ENCODE measurements at regions of chr11 and their contacts with region 1.

Region 1: DNA sequence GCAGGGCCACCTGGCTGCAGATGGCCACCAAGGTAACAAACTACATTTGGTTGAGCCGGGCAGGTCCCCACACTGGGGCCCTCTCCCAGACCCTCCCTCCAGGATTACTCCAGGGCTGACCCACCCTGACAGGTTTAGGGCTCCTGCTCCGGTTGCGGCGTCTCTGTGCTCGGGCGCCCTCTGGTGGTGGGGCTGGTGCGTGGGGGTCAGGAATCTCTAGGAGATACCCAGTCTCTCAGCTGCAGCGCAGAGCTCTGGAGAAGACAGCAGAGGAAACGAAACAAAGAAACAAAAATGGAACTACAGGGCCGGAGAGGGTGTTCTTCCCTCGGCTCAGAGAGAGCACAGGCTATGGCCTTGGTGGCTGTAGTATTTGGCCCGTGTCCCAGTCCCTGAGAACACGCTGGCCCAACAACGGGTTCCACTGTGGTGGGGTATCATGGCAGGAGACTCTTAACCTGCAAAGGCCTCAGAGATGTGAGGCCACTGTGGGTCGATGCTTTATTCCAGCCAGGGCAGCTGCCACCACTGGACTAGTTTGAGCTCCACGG is 2.4 kb downstream of the C11orf96 start:
- DNase-seq: peak; percentile 90
- ATAC-seq: peak; percentile 23

Region 2: DNA sequence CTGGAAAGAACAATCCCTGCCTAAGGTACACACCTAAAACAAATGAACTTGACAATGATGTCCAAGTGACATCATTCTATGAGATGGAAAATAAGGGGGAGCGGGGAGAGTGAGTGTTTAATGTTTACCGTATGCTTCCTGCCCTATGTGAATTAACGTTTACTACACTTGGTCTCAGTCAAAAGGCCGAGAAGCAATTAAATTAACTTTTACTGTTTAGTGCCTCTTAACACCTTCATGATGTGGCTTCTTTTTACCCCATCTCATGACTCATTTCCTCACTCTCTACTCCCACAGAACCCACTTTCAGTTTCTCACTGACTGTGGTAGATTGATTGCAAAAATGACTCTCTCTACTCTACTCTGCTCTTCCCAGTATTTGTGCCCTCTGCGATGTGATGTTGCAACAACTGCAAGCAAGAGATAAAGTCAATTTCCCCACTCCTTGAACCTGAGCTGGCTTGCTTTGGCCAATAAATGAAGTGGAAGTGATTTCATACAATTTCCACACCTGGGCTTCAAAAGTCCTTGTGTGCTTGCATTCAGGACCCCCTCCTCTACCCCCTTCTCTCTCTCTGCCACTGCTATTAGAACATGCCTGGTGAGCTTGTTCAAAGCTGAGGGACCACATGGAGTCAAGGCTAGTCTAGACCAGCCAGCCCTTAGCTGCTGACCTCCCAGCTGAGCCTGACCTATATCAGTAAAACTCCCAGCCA is 75.8 kb before region 1 on chr11:
- intact Hi-C with region 1: no loop called
- DNase-seq: no peak
- ATAC-seq: no peak

Region 3: GRCh38 chr11:43895601-43896000 is 49.2 kb before region 1 on chr11:
- intact Hi-C with region 1: loop called (anchors 5 kb)
- DNase-seq: no peak
- ATAC-seq: no peak

Region 4: DNA sequence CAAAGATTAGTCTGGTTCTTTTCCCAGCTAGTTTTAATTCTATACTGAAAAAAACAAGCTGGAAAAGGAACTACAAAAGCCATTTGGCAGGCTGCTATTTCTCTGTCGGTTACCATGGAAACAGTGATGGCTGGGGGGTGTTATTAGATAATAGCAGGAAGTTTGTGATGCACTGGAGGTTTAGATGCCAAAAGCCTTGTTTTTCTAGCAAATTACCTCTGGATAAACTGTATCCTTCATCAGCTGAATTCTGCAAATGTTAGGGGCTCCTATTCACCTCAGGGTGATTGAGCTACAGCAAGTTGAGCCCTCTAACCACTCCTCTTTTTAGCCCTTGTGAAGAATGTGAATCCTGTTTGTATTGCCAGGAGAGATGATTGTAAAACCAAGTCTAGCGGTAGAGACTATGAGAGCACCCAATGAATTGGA is 39.0 kb before region 1 on chr11:
- intact Hi-C with region 1: loop called (anchors 5 kb)
- DNase-seq: no peak
- ATAC-seq: peak; percentile 56

Region 5: DNA sequence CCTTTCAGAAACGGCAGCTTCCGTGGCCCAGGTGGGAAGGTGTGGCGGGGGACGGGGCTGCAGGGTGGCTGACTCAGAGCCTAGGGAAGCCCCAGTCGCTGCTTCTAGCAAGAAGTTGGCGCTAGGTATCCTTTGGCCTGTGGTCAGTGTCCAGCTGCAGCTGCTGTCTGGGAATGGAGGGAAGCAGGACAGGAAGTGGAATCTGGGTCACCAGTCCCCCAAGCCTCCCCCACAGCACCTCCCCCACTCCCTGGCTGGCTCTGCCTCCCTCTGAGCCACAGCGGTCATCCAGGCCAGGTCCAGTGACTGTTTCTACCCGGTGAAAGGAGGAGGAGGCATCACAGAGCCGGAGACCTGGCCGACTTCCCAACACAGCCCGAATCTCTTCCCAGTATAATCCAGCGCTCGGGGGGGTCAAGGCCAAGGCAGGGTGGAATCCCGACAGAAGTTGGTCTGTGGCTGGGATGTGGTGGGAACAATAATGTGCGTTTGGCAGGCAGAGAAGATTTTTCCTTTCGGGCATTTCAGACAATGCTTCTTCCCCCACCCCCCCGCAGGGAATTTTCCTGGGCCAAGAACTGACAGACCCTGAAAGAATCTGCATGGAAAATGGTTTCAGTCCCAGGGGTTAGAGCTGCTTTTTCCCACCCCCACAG is 42.7 kb after region 1 on chr11:
- intact Hi-C with region 1: loop called (anchors 2 kb)
- DNase-seq: peak; percentile 93
- ATAC-seq: peak; percentile 94

Region 6: DNA sequence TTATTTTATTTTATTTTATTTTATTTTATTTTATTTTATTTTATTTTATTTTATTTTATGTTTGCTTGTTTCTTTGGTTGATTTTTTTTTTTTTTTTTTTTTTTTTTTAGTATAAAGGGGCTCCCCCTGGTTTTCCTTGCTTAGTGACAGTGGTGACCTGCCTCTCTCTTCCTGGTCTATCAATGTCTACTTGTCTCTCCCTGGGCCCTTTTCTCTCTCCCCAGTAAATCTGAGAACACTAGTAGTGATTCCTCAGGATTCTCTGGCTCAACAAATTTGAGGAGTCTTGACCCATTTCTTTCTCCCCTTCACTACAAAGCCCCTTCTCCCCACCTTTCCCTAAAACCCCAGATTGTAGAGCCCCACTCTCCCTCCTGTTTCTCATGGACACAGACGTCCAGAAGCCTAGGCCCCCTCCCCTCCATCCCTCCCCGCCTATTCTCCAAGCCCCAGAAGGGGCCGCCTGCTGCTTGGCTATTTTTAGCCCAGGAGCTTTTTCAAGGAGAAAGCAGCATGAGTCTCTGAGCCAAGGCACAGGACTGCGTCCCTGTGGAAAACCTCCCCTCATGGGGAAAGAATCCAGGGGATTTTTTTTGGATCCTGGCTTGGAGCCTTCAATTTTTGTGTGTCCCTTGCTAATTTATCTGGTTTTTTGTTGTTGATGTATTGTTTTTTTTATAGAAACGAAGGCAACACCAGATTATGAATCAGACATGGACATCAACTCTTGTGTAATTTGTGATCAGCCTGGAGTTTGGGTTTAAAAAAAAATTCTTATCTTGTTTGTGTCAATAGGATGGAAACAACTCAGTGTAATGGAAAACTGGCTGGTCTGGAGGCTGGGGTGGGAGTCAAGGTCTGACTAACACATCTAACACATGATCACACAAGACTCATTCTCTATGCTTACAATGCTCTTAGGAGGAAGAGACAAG is 85.4 kb after region 1 on chr11:
- intact Hi-C with region 1: loop called (anchors 1 kb)
- DNase-seq: no peak
- ATAC-seq: peak; percentile 76

Measured in Right ventricle myocardium inferior (tissue), 1 donor.